K562 (cell line): ENCODE measurements at regions of chr4 and their contacts with region 1.

Region 1: DNA sequence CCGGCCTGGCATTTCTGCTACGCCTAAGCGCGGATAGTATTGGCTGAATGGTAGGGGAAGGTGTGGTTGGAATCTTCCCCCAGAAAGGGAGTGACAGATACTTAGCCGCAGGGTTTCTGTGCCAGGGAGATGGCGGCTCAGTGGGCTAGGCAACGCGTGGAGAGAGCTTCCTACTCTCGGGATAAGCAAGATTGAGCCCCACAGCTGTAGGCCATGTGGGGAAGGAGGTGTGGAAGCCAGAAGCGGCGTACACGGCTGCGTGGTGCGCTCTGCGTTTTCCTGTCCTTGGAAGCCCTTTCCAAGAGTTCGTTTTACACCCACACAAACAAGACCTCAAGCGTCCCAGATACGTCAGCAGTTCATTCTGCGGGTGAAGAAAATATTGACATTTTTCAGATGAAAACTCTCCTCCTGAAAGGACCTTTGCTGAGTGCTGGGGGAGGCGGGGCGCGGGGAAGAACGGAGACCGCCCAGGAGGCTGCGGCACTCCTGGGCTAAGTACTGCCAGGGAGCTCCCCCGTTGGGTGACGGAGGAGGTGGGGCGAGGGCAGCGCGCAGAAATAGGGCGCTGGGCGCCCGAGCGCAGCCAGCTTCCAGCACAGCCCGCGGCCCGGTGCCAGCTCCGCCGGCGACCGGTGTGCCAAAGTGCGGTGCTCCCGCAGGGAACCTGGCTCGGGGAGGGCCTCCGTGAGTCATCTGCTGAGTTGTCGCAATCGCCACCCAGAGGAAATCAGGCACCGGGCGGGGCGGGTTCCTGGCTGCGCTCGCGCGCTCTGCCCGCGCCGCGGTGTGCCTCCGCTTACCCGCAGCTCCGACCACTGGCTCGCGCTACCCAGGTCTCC is at the start of gene GPAT3:
- DNase-seq: peak; percentile 73 to 84 (median 78)
- ATAC-seq: peak; percentile 95
- H3K4me3 ChIP-seq: peak within 1 kb of the TSS; percentile 55
- H3K27ac ChIP-seq: peak within 1 kb of the TSS; percentile 54; the same call in 2 of the 3 replicates
- H3K4me1 ChIP-seq: peaks cover 8 to 18% of the 10 kb centered on the region in 2 experiments; a peak in 4 of 5 replicates
- H3K27me3 ChIP-seq: peaks cover 0 to 5% of the 10 kb centered on the region in 2 experiments; a peak in 1 of 5 replicates
- CTCF ChIP-seq: no peak
- EP300 ChIP-seq: no peak
- POLR2A ChIP-seq: peak; percentile 72; the same call in 1 of the 2 replicates
- RAD21 ChIP-seq: no peak
- polyA plus RNA-seq, gene GPAT3: 4.1 to 7.2 TPM

Region 2: DNA sequence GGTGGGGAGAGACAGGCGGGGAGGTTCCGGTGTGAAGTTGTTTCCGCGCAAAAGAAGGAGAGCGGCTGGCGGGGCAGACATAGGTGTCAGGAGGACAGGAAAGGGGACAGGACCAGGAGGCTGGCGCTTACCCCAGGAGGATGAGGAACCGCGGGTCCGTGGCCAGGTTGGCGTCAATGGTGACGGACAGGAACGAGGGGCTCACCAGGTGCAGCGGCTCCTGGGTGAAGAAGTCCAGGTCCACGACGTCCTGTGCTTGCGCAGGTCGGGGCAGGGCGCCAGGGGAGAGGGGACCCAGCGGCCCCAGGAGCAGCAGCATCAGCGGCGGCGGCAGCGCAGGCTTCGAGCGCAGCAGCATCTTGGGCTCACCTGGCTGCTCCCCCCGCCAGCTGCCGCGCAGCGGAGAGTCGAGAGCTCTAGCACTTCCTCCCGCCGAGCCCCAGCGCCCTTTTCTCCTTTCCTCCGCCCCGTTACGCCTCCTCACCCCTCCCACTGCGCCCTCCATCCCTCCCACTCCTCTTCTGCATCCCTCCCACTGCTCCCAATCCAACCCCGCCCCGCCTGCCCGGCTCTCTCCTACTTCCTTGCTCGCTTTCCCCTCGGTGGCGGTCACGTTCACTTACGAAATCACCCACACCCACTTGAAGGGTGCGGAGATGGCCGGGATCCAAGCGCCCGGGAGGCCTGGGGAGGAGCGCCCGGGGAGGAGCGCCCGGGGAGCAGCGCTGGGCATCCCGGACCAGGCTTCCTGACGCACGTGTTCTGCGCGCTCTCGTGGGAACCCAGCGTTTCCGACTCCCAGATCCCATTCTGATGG is 201.1 kb before region 1 on chr4 and contains the start of gene HPSE:
- CTCF ChIA-PET with region 1: no interaction called
- POLR2A ChIA-PET with region 1: no interaction called
- in situ Hi-C with region 1: no loop called
- intact Hi-C with region 1: no loop called
- DNase-seq: peak; percentile 41 to 59 (median 51)
- ATAC-seq: peak; percentile 79
- H3K4me3 ChIP-seq: peak within 1 kb of the TSS; percentile 20; the same call in 1 of the 2 replicates
- H3K27ac ChIP-seq: no peak within 1 kb of the TSS
- H3K4me1 ChIP-seq: peaks cover 4 to 9% of the 10 kb centered on the region in 2 experiments; a peak in 4 of 5 replicates
- H3K27me3 ChIP-seq: peaks cover 12 to 30% of the 10 kb centered on the region in 2 experiments
- CTCF ChIP-seq: no peak
- EP300 ChIP-seq: no peak
- POLR2A ChIP-seq: no peak
- RAD21 ChIP-seq: no peak
- polyA plus RNA-seq, gene HPSE: 0.01 to 0.04 TPM

Region 3: DNA sequence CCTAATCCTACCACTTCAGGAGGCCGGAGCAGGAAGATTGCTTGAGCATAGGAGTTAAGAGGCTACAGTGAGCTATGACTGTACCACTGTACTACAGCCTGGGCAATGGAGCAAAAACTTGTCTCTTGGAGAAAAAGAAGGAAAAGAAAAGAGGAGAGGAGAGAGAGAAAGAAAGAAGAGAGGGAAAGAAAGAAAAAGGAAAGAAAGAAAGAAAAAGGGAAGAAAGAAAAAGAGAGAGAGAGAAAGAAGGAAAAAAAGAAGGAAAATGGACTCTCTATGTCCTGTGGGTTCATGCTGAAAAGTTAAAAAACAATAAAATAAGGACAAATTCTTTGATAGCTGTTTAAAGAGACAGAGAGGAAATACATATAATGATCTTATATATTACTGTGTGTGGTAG is 37.6 kb before region 1 on chr4:
- CTCF ChIA-PET with region 1: no interaction called
- POLR2A ChIA-PET with region 1: interaction called, 5 read pairs
- in situ Hi-C with region 1: no loop called
- intact Hi-C with region 1: loop called (anchors 5 kb)
- DNase-seq: no peak
- ATAC-seq: no peak
- H3K4me3 ChIP-seq: no peak overlapping the region
- H3K27ac ChIP-seq: no peak overlapping the region
- H3K4me1 ChIP-seq: peaks cover 12 to 13% of the 10 kb centered on the region in 2 experiments; a peak in 4 of 5 replicates
- H3K27me3 ChIP-seq: no peaks in the 10 kb centered on the region
- CTCF ChIP-seq: no peak
- EP300 ChIP-seq: no peak
- POLR2A ChIP-seq: no peak
- RAD21 ChIP-seq: no peak

Region 4: GRCh38 chr4:83548151-83548905 is 12.6 kb after region 1 on chr4:
- CTCF ChIA-PET with region 1: no interaction called
- POLR2A ChIA-PET with region 1: interaction called, 12 read pairs
- in situ Hi-C with region 1: no loop called
- intact Hi-C with region 1: no loop called
- DNase-seq: peak; percentile 77 to 93 (median 84)
- ATAC-seq: peak; percentile 94
- H3K4me3 ChIP-seq: no peak overlapping the region
- H3K27ac ChIP-seq: peak overlapping the region; percentile 70
- H3K4me1 ChIP-seq: peaks cover 8 to 27% of the 10 kb centered on the region in 2 experiments; a peak in 4 of 5 replicates
- H3K27me3 ChIP-seq: no peaks in the 10 kb centered on the region
- CTCF ChIP-seq: no peak
- EP300 ChIP-seq: peak; percentile 73; the same call in 1 of the 2 replicates
- POLR2A ChIP-seq: no peak
- RAD21 ChIP-seq: no peak